Ovary (tissue), 10 donors: ENCODE measurements at regions of chr6 and their contacts with region 1.

Region 1: DNA sequence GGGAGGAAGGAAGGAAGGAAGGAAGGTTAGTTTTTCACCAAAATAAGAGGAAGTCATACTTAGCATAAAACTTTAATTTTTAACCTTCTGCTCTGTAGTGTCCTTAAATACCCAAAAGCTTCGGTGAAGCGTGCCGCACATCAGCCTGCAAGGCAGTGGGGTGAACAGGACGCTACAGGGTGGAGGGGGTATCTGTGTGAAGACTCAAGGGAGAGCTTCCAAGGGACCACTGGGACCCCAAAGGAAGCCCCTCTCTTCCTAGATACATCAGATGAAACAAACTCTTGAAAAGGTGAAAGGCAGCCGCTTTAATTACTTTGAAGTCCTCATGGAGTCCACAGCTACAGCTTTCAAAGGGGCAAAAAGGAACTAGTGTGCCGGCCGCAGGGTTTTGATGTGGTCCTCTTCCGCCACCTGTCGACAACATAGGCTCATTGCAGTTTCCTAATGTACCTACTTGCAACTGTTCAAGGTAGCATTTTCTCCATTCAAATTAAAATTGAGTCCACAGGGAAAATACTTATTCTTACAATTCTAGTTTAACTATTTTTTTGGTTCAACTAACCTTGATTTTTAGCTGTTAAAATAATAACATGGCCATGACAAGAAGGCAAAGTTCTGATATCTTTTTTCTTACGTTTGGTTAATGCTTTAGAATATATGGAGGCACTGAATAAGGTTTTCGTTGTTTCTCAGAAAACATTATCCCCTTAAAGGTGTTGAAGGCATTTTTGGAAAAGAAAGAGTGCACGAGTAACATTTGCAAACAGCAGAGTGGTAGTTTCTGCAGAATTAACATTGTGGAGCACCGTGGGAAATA is 135.0 kb upstream of the RIPOR2 start:
- DNase-seq: peak; percentile 71 to 83 (median 79)
- H3K4me3 ChIP-seq: no peak overlapping the region
- H3K27ac ChIP-seq: no peak overlapping the region
- H3K4me1 ChIP-seq: peaks cover 2% of the 10 kb centered on the region
- H3K27me3 ChIP-seq: no peaks in the 10 kb centered on the region
- CTCF ChIP-seq: peak; percentile 61 to 87 (median 86)
- EP300 ChIP-seq: no peak
- POLR2A ChIP-seq: no peak

Region 2: GRCh38 chr6:24855395-24856245 is 215.1 kb before region 1 on chr6:
- intact Hi-C with region 1: loop called (anchors 2 to 10 kb)
- DNase-seq: peak; percentile 31 to 60 (median 47)
- H3K4me3 ChIP-seq: no peak overlapping the region
- H3K27ac ChIP-seq: no peak overlapping the region
- H3K4me1 ChIP-seq: peaks cover 4% of the 10 kb centered on the region
- H3K27me3 ChIP-seq: no peaks in the 10 kb centered on the region
- CTCF ChIP-seq: peak; percentile 61 to 83 (median 80)
- EP300 ChIP-seq: no peak
- POLR2A ChIP-seq: no peak

Region 3: DNA sequence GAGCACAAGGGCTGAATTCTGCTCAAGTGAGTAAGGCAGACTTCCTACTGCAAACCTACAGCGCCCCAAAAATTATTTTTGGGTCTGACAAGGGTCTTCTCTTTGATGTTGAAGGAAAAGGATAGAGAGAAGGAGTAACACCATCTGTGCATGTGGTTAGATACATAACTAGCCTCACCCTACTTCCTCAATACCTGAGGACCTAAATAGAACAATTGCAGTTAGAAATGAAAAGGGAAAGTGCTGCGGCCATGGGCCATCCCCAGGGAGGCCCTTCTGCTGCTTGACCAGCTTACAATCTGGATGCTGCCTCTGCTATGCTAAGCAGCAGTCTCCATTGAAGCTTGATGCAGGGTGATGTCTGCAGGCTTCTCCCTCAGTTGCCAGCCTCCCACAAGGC is 208.8 kb before region 1 on chr6:
- intact Hi-C with region 1: loop called (anchors 2 to 10 kb)
- DNase-seq: no peak
- H3K4me3 ChIP-seq: no peak overlapping the region
- H3K27ac ChIP-seq: no peak overlapping the region
- H3K4me1 ChIP-seq: no peaks in the 10 kb centered on the region
- H3K27me3 ChIP-seq: no peaks in the 10 kb centered on the region
- CTCF ChIP-seq: no peak
- EP300 ChIP-seq: no peak
- POLR2A ChIP-seq: no peak